ENCODE measurements at regions of chr1 and their contacts with region 1.

Region 1: GRCh38 chr1:192539297-192540092 is 36.1 kb upstream of the RGS1 start:
- DNase-seq: peak in 2 of 35 experiments; percentile 24 to 37
- ATAC-seq: peak in 2 of 4 experiments; percentile 33 to 39
- H3K4me3 ChIP-seq: no peak overlapping the region
- H3K4me3 Mint-ChIP-seq: peak overlapping the region; percentile 10 to 49 (median 39)
- H3K27ac ChIP-seq: peak overlapping the region; percentile 72
- H3K27ac Mint-ChIP-seq: peak overlapping the region; percentile 88 to 94
- H3K4me1 ChIP-seq: peaks cover 8 to 10% of the 10 kb centered on the region in 2 experiments
- H3K4me1 Mint-ChIP-seq: peaks cover 30 to 62% (median 33%) of the 10 kb centered on the region in 3 donors
- H3K27me3 ChIP-seq: no peaks in the 10 kb centered on the region
- H3K27me3 Mint-ChIP-seq: no peaks in the 10 kb centered on the region

Region 2: DNA sequence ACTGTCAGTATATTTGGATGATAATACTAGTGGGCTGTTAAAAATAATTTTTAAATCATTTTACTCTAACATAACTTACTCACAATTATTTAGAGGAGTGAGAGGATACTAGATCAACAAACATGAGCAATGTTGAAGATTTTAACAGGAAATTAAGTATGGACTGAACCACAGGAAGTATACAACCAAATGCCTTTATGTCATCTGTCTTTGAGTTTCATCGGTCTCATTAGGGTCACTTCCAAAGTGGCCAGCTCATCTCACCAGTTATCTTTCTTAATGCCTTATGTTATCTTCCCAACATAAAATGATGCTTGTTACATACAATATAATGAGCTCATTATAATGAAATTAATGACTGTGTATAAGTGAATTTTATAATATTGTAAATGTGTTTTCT is 34.6 kb after region 1 on chr1:
- CTCF ChIA-PET with region 1: interaction called in 1 of 2 experiments, 3 read pairs
- POLR2A ChIA-PET with region 1: interaction called, 12 to 15 read pairs
- DNase-seq: no peak
- ATAC-seq: no peak
- H3K4me3 ChIP-seq: no peak overlapping the region
- H3K4me3 Mint-ChIP-seq: no peak overlapping the region
- H3K27ac ChIP-seq: peak overlapping the region; percentile 62
- H3K27ac Mint-ChIP-seq: peak overlapping the region in 1 of 2 donors; percentile 78
- H3K4me1 ChIP-seq: peaks cover 12 to 49% of the 10 kb centered on the region in 2 experiments
- H3K4me1 Mint-ChIP-seq: peaks cover 66 to 79% (median 77%) of the 10 kb centered on the region in 3 donors
- H3K27me3 ChIP-seq: no peaks in the 10 kb centered on the region
- H3K27me3 Mint-ChIP-seq: no peaks in the 10 kb centered on the region

Region 3: GRCh38 chr1:192627901-192628300 is 88.4 kb after region 1 on chr1:
- CTCF ChIA-PET with region 1: no interaction called
- POLR2A ChIA-PET with region 1: no interaction called
- DNase-seq: no peak
- ATAC-seq: no peak
- H3K4me3 ChIP-seq: no peak overlapping the region
- H3K4me3 Mint-ChIP-seq: no peak overlapping the region
- H3K27ac ChIP-seq: no peak overlapping the region
- H3K27ac Mint-ChIP-seq: no peak overlapping the region
- H3K4me1 ChIP-seq: no peaks in the 10 kb centered on the region
- H3K4me1 Mint-ChIP-seq: no peaks in the 10 kb centered on the region
- H3K27me3 ChIP-seq: no peaks in the 10 kb centered on the region
- H3K27me3 Mint-ChIP-seq: peaks cover 0 to 20% of the 10 kb centered on the region in 2 donors

Measured in T-cell (primary cell).